HEK293 (cell line): ENCODE measurements at regions of chr2 and their contacts with region 1.

Region 1: DNA sequence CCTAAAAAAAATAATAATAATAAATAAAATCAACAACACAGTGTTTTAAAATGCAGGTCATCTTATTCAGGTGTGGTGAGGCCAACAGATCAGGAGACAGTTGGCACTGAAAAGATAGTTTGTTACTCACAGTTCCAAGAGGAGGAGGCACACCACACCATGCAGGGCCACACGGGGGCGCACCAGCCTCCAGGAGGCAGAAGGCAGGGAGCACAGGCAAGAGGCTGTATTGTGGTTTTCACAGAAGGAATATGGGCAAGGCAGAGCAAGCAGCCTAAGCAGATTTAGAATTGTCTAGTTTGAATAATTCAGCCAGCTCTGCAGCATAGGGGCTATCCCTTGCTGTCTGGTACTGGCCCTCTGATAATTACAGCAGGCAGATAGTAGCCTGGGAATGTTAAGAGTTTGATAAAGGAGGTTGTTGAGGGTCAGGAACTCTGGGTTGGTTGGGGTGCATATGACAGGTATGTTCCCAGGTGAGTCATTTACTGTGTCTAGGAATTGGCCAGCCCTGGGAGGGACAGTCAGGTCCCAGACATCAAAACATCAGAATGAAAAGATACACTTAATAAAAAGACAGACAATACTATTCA is 31.3 kb downstream of the KIAA2012 start:
- H3K4me3 ChIP-seq: no peak overlapping the region
- H3K27ac ChIP-seq: no peak overlapping the region
- H3K4me1 ChIP-seq: peaks cover 3% of the 10 kb centered on the region; the same call in 1 of the 2 replicates
- CTCF ChIP-seq: peak; percentile 72

Region 2: GRCh38 chr2:202149155-202149762 is 44.9 kb after region 1 on chr2:
- CTCF ChIA-PET with region 1: interaction called, 13 read pairs
- POLR2A ChIA-PET with region 1: no interaction called
- H3K4me3 ChIP-seq: no peak overlapping the region
- H3K27ac ChIP-seq: no peak overlapping the region
- H3K4me1 ChIP-seq: peaks cover 7% of the 10 kb centered on the region
- CTCF ChIP-seq: no peak

Region 3: DNA sequence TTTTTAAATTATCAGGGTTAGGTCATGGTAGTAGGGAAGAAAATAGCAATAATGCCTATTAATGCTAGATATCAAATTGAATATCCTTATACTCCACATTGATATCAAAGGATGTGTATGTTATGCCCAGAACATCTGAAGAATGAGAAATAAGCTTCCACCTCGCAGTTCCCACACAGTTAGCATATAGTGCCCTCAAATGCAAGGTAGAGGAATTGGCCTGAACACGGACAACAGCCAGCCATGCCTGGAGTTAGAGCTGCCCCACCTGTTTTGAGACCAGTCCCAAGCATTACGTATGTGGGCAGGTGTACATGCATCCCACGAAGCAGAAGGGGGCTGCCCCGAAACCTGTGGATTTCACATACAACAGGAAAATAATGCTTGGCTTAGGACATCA is 54.4 kb after region 1 on chr2:
- CTCF ChIA-PET with region 1: interaction called, 12 read pairs
- POLR2A ChIA-PET with region 1: no interaction called
- H3K4me3 ChIP-seq: no peak overlapping the region
- H3K27ac ChIP-seq: no peak overlapping the region
- H3K4me1 ChIP-seq: no peaks in the 10 kb centered on the region; the same call in none of the 2 replicates
- CTCF ChIP-seq: 0 out of 2 replicates have a peak, but pooled peaks have one; percentile 49

Region 4: DNA sequence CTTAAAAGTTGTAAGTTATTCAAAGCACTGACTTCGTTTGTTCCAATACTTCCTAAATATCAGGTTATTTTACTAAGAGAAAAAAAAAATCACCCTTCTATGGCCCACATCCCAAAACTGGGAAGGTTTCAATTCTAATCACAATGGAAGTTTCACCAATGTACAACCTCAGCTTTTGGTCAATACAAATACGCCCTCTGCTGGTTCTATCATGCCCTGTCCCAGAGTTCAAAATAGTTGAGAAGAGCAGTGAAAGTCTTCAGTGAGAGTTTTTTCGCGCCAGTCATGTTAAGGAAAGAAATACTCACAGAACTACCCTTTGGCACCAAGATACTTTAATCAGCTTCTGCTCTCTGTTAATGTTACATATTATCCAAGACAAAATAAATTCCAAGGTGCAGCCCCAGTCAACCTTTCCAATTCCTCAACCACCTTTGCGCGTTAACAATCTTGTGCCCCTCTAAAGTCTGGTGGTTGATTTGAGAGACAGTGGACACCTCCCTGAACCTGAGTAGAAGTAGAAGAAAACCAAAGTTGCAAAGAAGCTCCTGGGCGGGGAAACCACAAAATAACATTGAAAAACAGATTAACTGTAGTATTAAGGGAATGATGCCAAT is 74.1 kb after region 1 on chr2:
- CTCF ChIA-PET with region 1: interaction called, 13 read pairs
- POLR2A ChIA-PET with region 1: no interaction called
- H3K4me3 ChIP-seq: no peak overlapping the region
- H3K27ac ChIP-seq: no peak overlapping the region
- H3K4me1 ChIP-seq: no peaks in the 10 kb centered on the region
- CTCF ChIP-seq: 0 out of 2 replicates have a peak, but pooled peaks have one; percentile 34

Region 5: DNA sequence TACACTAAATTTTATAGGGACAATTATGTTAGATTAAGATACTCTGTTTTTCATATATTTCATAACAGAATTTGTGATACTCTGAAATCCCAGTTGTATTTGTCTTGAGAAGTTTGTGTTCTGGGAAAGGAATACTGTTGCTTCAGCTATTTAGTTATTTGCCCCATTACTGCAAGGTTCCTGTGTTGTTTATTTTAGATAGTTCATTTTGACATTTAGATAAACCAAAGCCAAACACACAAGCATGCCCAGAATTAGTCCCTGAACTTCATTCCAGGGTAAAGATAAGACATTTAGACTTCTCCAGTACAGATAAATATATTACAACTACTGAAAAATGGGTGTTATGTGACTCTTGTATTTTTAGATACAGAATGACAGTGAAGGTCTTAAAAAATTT is 346.4 kb after region 1 on chr2:
- CTCF ChIA-PET with region 1: no interaction called
- POLR2A ChIA-PET with region 1: no interaction called
- H3K4me3 ChIP-seq: no peak overlapping the region
- H3K27ac ChIP-seq: no peak overlapping the region
- H3K4me1 ChIP-seq: peaks cover 4% of the 10 kb centered on the region; the same call in 1 of the 2 replicates
- CTCF ChIP-seq: no peak